Activated B cell treated with CpG ODN at 0.5 μM for 24 hours (primary cell): ENCODE measurements at regions of chr11 and their contacts with region 1.

Region 1: DNA sequence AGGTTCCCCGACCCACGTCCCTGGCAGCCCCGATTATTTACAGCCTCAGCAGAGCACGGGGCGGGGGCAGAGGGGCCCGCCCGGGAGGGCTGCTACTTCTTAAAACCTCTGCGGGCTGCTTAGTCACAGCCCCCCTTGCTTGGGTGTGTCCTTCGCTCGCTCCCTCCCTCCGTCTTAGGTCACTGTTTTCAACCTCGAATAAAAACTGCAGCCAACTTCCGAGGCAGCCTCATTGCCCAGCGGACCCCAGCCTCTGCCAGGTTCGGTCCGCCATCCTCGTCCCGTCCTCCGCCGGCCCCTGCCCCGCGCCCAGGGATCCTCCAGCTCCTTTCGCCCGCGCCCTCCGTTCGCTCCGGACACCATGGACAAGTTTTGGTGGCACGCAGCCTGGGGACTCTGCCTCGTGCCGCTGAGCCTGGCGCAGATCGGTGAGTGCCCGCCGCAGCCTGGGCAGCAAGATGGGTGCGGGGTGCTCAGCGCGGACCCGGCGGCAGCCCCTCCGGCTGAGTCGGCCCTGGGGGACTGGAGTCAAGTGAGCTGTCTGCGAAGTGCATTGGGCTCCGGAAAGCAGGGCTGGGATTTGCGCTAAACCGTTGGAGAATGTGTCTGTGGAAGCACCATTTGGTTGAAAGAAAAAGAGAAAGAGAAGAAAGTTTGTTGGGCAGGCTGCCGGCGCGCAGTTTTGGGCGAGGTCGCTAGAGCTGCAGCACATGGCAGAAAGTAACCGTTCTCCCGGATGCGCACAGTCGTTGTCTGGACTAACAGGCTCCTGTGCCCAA is at the start of gene CD44:
- DNase-seq: peak; percentile 68
- ATAC-seq: peak; percentile 79
- H3K4me3 Mint-ChIP-seq: peak within 1 kb of the TSS; percentile 97
- H3K27ac Mint-ChIP-seq: peak within 1 kb of the TSS; percentile 98
- H3K4me1 Mint-ChIP-seq: peaks cover 57% of the 10 kb centered on the region
- H3K27me3 Mint-ChIP-seq: no peaks in the 10 kb centered on the region
- CTCF ChIP-seq: no peak
- total RNA-seq, gene CD44: 1,441 and 1,546 TPM in 2 replicates

Region 2: GRCh38 chr11:34940026-34940677 is 199.0 kb before region 1 on chr11:
- CTCF ChIA-PET with region 1: no interaction called
- POLR2A ChIA-PET with region 1: no interaction called
- intact Hi-C with region 1: no loop called
- DNase-seq: no peak
- ATAC-seq: no peak
- H3K4me3 Mint-ChIP-seq: no peak overlapping the region
- H3K27ac Mint-ChIP-seq: no peak overlapping the region
- H3K4me1 Mint-ChIP-seq: peaks cover 17% of the 10 kb centered on the region
- H3K27me3 Mint-ChIP-seq: no peaks in the 10 kb centered on the region
- CTCF ChIP-seq: no peak

Region 3: GRCh38 chr11:35006389-35007128 is 132.6 kb before region 1 on chr11:
- CTCF ChIA-PET with region 1: no interaction called
- POLR2A ChIA-PET with region 1: interaction called, 54 read pairs
- intact Hi-C with region 1: no loop called
- DNase-seq: peak; percentile 27
- ATAC-seq: peak; percentile 92
- H3K4me3 Mint-ChIP-seq: peak overlapping the region; percentile 28
- H3K27ac Mint-ChIP-seq: peak overlapping the region; percentile 84
- H3K4me1 Mint-ChIP-seq: peaks cover 58% of the 10 kb centered on the region
- H3K27me3 Mint-ChIP-seq: no peaks in the 10 kb centered on the region
- CTCF ChIP-seq: no peak

Region 4: GRCh38 chr11:35030716-35031213 is 108.4 kb before region 1 on chr11:
- CTCF ChIA-PET with region 1: interaction called, 6 read pairs
- POLR2A ChIA-PET with region 1: interaction called, 43 read pairs
- intact Hi-C with region 1: no loop called
- DNase-seq: no peak
- ATAC-seq: peak; percentile 58
- H3K4me3 Mint-ChIP-seq: peak overlapping the region; percentile 79
- H3K27ac Mint-ChIP-seq: peak overlapping the region; percentile 96
- H3K4me1 Mint-ChIP-seq: peaks cover 75% of the 10 kb centered on the region
- H3K27me3 Mint-ChIP-seq: no peaks in the 10 kb centered on the region
- CTCF ChIP-seq: no peak

Region 5: DNA sequence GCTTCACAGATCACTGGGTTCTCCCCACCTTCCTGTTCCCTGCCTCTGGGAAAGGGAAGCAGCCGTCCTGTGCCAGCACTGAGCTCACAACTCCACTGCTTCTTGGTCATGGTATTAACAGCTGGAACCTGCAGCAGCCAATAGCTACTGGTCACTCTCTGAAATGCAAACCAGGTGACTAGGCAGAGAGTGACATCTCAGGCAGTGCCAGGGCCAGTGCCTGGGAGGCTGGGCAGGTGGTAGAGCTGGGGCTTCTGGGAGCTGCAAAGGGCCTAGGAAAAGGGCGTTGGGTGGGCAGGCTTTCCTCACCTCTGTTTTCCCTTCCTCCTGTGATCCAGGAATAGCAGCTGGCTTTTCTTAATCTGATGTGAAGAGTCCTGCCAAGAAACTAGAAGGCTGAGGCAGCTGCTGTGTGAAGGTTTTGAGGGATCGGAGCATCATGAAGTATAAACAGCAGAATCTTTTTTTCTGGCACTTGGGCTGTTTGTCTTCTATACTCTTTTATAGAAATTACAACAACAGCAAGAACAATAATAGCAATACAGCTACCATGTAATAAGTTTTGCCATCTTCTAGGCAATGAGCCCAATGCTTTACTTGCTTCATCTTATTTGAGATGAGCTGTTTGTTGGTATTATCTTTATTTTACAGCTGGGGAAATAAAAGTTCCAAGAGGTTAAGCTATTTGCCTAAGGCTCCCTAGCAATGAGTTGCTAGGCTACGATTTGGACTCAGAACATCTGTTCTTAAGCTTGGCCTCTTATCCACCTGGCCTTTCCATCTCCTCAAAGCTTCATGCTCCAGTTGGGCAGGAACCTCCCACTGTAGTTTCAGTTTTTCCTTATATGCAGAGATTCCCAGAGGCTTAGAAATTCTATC is 22.1 kb before region 1 on chr11:
- CTCF ChIA-PET with region 1: interaction called, 4 read pairs
- POLR2A ChIA-PET with region 1: interaction called, 47 read pairs
- intact Hi-C with region 1: loop called (anchors 2 kb)
- DNase-seq: no peak
- ATAC-seq: no peak
- H3K4me3 Mint-ChIP-seq: no peak overlapping the region
- H3K27ac Mint-ChIP-seq: peak overlapping the region; percentile 66
- H3K4me1 Mint-ChIP-seq: peaks cover 85% of the 10 kb centered on the region
- H3K27me3 Mint-ChIP-seq: no peaks in the 10 kb centered on the region
- CTCF ChIP-seq: no peak

Region 6: GRCh38 chr11:35151241-35151640 is 12.1 kb after region 1 on chr11:
- CTCF ChIA-PET with region 1: no interaction called
- POLR2A ChIA-PET with region 1: interaction called, 27 read pairs
- intact Hi-C with region 1: no loop called
- DNase-seq: no peak
- ATAC-seq: no peak
- H3K4me3 Mint-ChIP-seq: peak overlapping the region; percentile 11
- H3K27ac Mint-ChIP-seq: peak overlapping the region; percentile 57
- H3K4me1 Mint-ChIP-seq: peaks cover 99% of the 10 kb centered on the region
- H3K27me3 Mint-ChIP-seq: no peaks in the 10 kb centered on the region
- CTCF ChIP-seq: no peak

Region 7: DNA sequence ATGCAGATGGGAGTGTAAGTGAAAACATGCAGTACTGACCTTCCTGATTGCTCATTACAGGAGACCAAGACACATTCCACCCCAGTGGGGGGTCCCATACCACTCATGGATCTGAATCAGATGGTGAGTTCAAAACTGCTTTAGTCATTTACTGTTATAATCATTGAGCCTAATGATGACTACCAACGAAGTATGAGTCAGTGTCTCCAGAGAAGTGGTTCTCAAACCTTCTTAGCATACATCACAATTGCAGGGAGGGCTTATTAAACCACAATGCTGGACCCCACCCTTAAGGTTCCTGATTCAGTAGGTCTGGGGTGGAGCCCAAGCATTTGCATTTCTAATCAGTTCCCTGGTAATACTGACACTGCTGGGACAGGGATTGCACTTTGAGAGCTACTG is 75.7 kb after region 1 on chr11:
- CTCF ChIA-PET with region 1: no interaction called
- POLR2A ChIA-PET with region 1: no interaction called
- intact Hi-C with region 1: loop called (anchors 1 kb)
- DNase-seq: no peak
- ATAC-seq: peak; percentile 32
- H3K4me3 Mint-ChIP-seq: peak overlapping the region; percentile 44
- H3K27ac Mint-ChIP-seq: peak overlapping the region; percentile 70
- H3K4me1 Mint-ChIP-seq: peaks cover 82% of the 10 kb centered on the region
- H3K27me3 Mint-ChIP-seq: no peaks in the 10 kb centered on the region
- CTCF ChIP-seq: no peak

Region 8: GRCh38 chr11:35383953-35384352 is 244.8 kb after region 1 on chr11:
- CTCF ChIA-PET with region 1: no interaction called
- POLR2A ChIA-PET with region 1: no interaction called
- intact Hi-C with region 1: no loop called
- DNase-seq: no peak
- ATAC-seq: no peak
- H3K4me3 Mint-ChIP-seq: no peak overlapping the region
- H3K27ac Mint-ChIP-seq: no peak overlapping the region
- H3K4me1 Mint-ChIP-seq: peaks cover 4% of the 10 kb centered on the region
- H3K27me3 Mint-ChIP-seq: no peaks in the 10 kb centered on the region
- CTCF ChIP-seq: no peak